OCI-LY7 (cell line): ENCODE measurements at regions of chr19 and their contacts with region 1.

Region 1: GRCh38 chr19:13195678-13196077 is 45.5 kb downstream of the IER2 start:
- DNase-seq: peak; percentile 84
- H3K4me3 ChIP-seq: no peak overlapping the region
- H3K27ac ChIP-seq: no peak overlapping the region
- H3K4me1 ChIP-seq: peaks cover 16% of the 10 kb centered on the region
- CTCF ChIP-seq: peak; percentile 96

Region 2: GRCh38 chr19:12913011-12913561 is 282.6 kb before region 1 on chr19:
- CTCF ChIA-PET with region 1: no interaction called
- POLR2A ChIA-PET with region 1: no interaction called
- intact Hi-C with region 1: no loop called
- DNase-seq: no peak
- H3K4me3 ChIP-seq: no peak overlapping the region
- H3K27ac ChIP-seq: no peak overlapping the region
- H3K4me1 ChIP-seq: no peaks in the 10 kb centered on the region
- CTCF ChIP-seq: no peak

Region 3: GRCh38 chr19:13155472-13156359 is 40.0 kb before region 1 on chr19:
- CTCF ChIA-PET with region 1: no interaction called
- POLR2A ChIA-PET with region 1: interaction called, 3 read pairs
- intact Hi-C with region 1: loop called (anchors 2 kb)
- DNase-seq: peak; percentile 91
- H3K4me3 ChIP-seq: peak overlapping the region; percentile 97
- H3K27ac ChIP-seq: peak overlapping the region; percentile 100
- H3K4me1 ChIP-seq: peaks cover 53% of the 10 kb centered on the region
- CTCF ChIP-seq: no peak

Region 4: GRCh38 chr19:13234518-13234917 is 38.8 kb after region 1 on chr19:
- CTCF ChIA-PET with region 1: interaction called, 4 read pairs
- POLR2A ChIA-PET with region 1: no interaction called
- intact Hi-C with region 1: loop called (anchors 1 kb)
- DNase-seq: peak; percentile 74
- H3K4me3 ChIP-seq: peak overlapping the region; percentile 31
- H3K27ac ChIP-seq: no peak overlapping the region
- H3K4me1 ChIP-seq: peaks cover 12% of the 10 kb centered on the region
- CTCF ChIP-seq: peak; percentile 84

Region 5: DNA sequence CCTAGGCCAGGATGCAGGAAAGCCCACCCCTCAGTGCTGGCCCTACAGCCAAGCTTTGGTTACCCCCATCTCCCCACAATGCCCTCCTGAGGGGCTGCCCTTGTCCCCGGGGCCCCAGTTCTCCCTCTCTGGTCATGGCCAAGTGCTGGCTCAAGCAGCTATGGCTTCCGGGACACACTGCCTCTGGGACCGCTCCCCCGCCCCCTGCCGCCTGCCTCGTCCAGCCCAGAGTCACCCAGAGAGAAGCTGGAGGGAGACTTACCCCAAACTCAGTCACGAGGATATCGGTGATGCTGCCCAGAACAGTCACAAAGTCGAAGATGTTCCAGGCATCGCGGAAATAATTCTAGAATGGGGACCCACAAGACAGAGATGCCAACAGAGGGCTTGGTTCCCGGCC is 49.2 kb after region 1 on chr19:
- CTCF ChIA-PET with region 1: no interaction called
- POLR2A ChIA-PET with region 1: no interaction called
- intact Hi-C with region 1: loop called (anchors 5 kb)
- DNase-seq: no peak
- H3K4me3 ChIP-seq: no peak overlapping the region
- H3K27ac ChIP-seq: no peak overlapping the region
- H3K4me1 ChIP-seq: peaks cover 5% of the 10 kb centered on the region
- CTCF ChIP-seq: no peak

Region 6: DNA sequence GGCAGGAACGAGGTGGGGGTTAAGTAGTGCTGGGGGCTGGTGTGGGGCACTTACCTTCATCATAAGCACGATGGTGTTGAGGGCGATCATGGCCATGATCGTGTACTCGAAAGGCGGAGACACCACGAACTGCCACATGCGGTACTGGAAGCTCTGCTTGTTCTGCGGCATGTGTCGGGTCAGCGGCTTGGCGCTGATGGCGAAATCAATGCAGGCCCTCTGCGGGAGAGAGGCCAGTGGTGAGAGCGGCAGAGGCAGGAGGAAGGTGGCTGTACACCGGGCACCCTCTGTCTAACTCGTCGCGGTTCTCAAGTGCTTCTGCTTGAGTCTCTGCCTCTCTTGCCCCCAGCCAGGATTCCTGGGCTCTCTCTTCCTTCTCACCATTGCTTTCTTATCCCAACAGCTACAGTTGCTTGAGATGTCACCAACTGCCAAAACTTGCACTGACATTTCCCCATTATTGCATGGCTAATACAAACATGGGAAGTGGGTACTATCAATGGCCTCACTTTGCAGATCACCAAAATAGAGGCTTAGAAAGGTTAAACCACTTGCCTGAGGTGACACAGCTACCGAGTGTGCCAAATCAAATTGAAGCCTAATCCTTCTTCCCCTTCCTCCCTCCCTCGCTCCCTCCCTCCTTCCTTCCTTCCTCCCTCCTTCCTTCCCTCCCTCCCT is 59.5 kb after region 1 on chr19:
- CTCF ChIA-PET with region 1: no interaction called
- POLR2A ChIA-PET with region 1: no interaction called
- intact Hi-C with region 1: no loop called
- DNase-seq: no peak
- H3K4me3 ChIP-seq: no peak overlapping the region
- H3K27ac ChIP-seq: no peak overlapping the region
- H3K4me1 ChIP-seq: no peaks in the 10 kb centered on the region
- CTCF ChIP-seq: no peak